Activated CD4-positive, alpha-beta T cell treated with anti-CD3 and anti-CD28 coated beads, Interleukin-2, amount 10 ng/mL, durations not matched to agents 7 days and 5 days (primary cell): ENCODE measurements at regions of chr2 and their contacts with region 1.

Region 1: GRCh38 chr2:233387667-233388528 is 33.6 kb downstream of the DGKD start:
- DNase-seq: no peak
- H3K4me3 Mint-ChIP-seq: no peak overlapping the region
- H3K27ac Mint-ChIP-seq: no peak overlapping the region
- H3K4me1 Mint-ChIP-seq: peaks cover 63% of the 10 kb centered on the region
- H3K27me3 Mint-ChIP-seq: no peaks in the 10 kb centered on the region

Region 2: DNA sequence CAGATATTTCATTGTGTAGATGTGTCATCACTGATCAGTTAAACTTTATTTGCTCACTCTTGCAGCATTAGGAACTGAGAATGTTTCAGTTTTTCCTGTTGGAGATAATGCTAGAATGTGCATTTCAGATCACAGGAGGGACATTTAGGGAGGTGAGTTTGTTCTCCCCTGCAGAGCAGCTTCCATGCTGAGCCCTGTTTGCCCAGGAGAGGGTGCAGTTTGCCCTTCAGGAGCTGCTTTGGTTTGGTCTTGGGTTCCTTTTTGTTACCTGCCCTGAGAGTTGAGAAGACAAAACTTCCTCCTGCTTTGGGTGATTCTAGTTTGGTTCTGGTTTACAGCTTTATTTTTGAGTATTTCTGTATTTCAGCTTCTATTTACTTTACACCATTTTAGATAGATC is 16.3 kb after region 1 on chr2:
- CTCF ChIA-PET with region 1: interaction called, 16 read pairs
- POLR2A ChIA-PET with region 1: no interaction called
- DNase-seq: peak; percentile 83
- H3K4me3 Mint-ChIP-seq: no peak overlapping the region
- H3K27ac Mint-ChIP-seq: peak overlapping the region; percentile 79
- H3K4me1 Mint-ChIP-seq: peaks cover 63% of the 10 kb centered on the region
- H3K27me3 Mint-ChIP-seq: no peaks in the 10 kb centered on the region

Region 3: DNA sequence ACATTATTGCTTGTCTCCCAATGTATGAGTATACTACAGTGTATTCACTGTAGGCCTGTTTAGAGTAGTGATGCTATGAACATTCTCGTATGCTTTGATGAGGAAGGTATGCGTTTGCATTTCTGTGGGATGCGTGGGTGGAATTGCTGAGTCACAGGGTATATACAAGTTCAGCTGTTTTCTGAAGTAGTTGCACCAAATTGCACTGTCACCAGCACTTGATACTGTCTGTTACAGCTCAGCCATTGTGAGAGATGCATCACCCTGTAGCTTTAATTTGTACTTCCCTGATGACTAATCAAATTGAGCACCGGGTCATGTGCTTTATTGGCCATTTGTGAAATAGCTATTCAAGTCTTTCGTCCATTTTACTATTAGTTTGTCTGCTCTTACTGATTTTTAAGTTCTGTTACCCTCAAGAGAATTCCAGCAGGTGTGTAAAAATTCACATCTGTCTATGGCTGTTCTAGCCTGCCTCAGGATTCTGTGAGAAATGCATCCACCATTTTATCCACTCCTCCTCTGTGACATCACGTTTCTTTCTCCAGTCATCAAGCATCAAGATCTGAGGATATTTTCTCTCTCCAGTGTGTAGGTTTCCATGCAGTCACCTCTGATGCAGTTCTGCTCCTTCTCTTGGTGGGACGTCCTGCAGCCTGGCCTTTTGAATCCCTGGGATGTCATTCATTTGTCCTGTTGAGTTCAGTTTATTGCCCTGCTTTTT is 38.9 kb after region 1 on chr2:
- CTCF ChIA-PET with region 1: no interaction called
- POLR2A ChIA-PET with region 1: no interaction called
- DNase-seq: peak; percentile 14
- H3K4me3 Mint-ChIP-seq: no peak overlapping the region
- H3K27ac Mint-ChIP-seq: peak overlapping the region; percentile 7
- H3K4me1 Mint-ChIP-seq: peaks cover 81% of the 10 kb centered on the region
- H3K27me3 Mint-ChIP-seq: no peaks in the 10 kb centered on the region